Colonic mucosa (tissue), 4 donors: ENCODE measurements at regions of chr9 and their contacts with region 1.

Region 1: DNA sequence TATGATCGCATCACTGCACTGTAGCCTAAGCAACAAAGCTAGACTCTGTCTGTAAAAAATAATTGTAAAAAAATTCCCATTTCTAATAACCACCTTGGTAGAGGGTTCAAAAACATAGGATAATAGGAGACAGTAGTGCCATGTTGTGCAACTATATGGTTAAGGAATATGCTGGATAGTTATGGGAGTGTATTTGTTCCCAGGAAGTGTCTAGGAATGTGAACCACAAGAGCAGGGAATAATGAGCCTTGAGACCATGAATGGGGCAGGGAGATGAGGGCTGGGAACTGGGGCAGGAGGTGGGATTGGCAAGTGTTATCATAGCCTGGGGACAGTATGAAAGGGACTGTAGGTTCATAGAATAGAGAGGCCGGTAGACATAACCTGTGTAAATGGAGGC is 50.4 kb downstream of the RUSC2 start:
- DNase-seq: no peak
- H3K4me3 ChIP-seq: no peak overlapping the region
- H3K27ac ChIP-seq: no peak overlapping the region
- H3K4me1 ChIP-seq: no peaks in the 10 kb centered on the region
- H3K27me3 ChIP-seq: no peaks in the 10 kb centered on the region
- CTCF ChIP-seq: no peak

Region 2: GRCh38 chr9:35508069-35508468 is 32.2 kb before region 1 on chr9:
- intact Hi-C with region 1: loop called (anchors 5 kb)
- DNase-seq: no peak
- H3K4me3 ChIP-seq: no peak overlapping the region
- H3K27ac ChIP-seq: no peak overlapping the region
- H3K4me1 ChIP-seq: peaks cover 6% of the 10 kb centered on the region
- H3K27me3 ChIP-seq: no peaks in the 10 kb centered on the region
- CTCF ChIP-seq: no peak